ENCODE measurements at regions of chr3 and their contacts with region 1.

Region 1: GRCh38 chr3:10602769-10603768 is 97.7 kb upstream of the ATP2B2 start:
- DNase-seq: peak; percentile 85
- ATAC-seq: peak; percentile 96
- H3K4me3 Mint-ChIP-seq: no peak overlapping the region
- H3K27ac Mint-ChIP-seq: no peak overlapping the region
- H3K4me1 Mint-ChIP-seq: peaks cover 29% of the 10 kb centered on the region
- H3K27me3 Mint-ChIP-seq: peaks cover 37% of the 10 kb centered on the region
- CTCF ChIP-seq: no peak

Region 2: GRCh38 chr3:10551821-10552630 is 51.0 kb before region 1 on chr3:
- CTCF ChIA-PET with region 1: no interaction called
- POLR2A ChIA-PET with region 1: no interaction called
- intact Hi-C with region 1: loop called (anchors 2 kb)
- DNase-seq: peak; percentile 94
- ATAC-seq: peak; percentile 74
- H3K4me3 Mint-ChIP-seq: peak overlapping the region; percentile 51
- H3K27ac Mint-ChIP-seq: peak overlapping the region; percentile 84
- H3K4me1 Mint-ChIP-seq: peaks cover 34% of the 10 kb centered on the region
- H3K27me3 Mint-ChIP-seq: peaks cover 6% of the 10 kb centered on the region
- CTCF ChIP-seq: no peak

Region 3: DNA sequence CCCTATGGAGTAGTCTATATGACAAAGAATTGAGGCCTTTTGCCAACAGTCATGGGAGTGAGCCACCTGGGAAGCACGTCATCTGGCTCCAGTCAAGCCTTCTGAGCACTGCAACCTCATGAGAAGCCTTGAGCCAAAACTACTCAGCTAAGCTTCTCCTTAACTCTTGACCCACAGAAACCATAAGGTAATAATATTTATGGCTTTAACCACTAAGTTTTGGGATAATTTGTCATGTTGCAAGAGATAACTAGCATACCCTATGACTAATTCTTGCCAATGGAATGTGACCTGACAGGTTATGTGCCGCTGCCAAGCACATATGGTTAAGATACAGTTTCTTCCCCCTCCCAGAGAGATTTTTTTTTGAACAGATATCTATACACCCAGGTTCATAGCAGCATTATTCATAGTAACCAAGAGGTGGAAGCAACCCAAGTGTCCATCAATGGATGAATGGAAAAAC is 201.1 kb after region 1 on chr3:
- CTCF ChIA-PET with region 1: no interaction called
- POLR2A ChIA-PET with region 1: no interaction called
- intact Hi-C with region 1: no loop called
- DNase-seq: no peak
- ATAC-seq: no peak
- H3K4me3 Mint-ChIP-seq: no peak overlapping the region
- H3K27ac Mint-ChIP-seq: no peak overlapping the region
- H3K4me1 Mint-ChIP-seq: no peaks in the 10 kb centered on the region
- H3K27me3 Mint-ChIP-seq: peaks cover 7% of the 10 kb centered on the region
- CTCF ChIP-seq: no peak